ENCODE measurements at regions of chr3 and their contacts with region 1.

Region 1: DNA sequence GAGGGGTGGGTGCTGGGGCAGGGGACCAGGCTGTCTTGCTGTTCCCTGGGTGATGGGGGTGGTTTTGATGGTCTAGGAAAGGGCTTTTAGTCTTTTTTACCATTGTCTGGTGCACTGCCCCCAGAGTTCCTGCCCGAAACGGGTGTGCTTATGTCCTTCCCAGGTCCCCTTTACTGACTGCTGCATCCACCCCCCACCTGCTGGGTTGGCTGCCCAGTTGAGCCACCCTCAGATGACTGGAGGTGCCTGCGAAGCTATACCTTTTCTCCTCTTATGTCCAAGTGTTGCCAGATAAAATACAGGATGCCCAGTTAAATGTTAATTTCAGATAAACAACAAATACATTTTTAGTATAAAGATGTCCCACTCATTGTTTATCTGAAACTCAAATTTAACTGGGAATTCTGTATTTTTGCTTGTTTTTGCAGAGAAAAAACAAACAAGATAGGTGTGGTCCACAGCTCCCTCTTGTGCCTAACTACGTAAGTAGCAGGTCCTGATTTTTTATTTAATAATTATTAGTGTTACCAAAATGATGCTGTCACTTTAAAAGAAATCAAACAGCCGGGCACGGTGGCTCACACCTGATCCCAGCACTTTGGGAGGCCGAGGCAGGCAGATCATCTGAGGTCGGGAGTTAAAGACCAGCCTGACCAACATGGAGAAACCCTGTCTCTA is 6.1 kb upstream of the RPP14 start:
- DNase-seq: no peak
- ATAC-seq: no peak

Region 2: DNA sequence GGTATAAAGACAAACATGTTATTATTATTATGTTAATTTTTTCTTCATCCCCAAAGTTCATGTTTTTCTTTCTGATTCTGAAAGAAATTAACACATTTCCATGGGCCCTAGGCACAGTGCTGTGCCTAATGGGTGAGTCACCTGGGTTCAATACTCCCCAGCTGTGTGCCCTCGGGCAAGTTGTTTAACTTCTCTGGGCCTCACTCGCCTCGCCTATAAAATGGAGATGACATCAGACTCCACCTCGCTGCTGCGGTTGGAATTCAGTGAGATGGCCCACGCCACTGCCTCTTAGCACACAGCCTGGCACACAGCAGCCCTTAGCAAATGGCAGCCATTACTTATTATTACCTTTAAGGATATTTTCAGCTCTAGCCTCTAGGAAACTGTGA is 111.8 kb before region 1 on chr3:
- intact Hi-C with region 1: loop called (anchors 5 to 10 kb)
- DNase-seq: no peak
- ATAC-seq: no peak

Region 3: DNA sequence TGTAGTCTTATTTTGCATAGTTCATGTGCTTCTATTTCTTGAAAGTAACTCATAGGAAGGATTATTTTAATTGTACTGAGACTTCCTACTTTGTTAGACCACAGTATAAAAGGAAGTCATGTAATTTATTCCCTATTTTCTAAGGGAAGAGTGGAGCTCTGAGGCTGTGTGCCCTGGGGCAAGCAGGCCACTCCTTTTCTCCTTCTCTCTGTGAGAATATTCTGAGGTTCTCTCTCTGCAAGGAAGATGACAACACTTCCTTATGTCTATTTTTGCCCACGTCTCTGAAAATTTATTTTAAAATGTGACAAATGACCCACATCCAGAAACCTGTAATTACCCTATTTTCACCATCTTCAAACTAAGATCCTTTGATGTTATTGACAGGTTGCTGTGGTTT is 202.9 kb after region 1 on chr3:
- intact Hi-C with region 1: no loop called
- DNase-seq: no peak
- ATAC-seq: no peak